Vagina (tissue), 2 donors: ENCODE measurements at regions of chr20 and their contacts with region 1.

Region 1: DNA sequence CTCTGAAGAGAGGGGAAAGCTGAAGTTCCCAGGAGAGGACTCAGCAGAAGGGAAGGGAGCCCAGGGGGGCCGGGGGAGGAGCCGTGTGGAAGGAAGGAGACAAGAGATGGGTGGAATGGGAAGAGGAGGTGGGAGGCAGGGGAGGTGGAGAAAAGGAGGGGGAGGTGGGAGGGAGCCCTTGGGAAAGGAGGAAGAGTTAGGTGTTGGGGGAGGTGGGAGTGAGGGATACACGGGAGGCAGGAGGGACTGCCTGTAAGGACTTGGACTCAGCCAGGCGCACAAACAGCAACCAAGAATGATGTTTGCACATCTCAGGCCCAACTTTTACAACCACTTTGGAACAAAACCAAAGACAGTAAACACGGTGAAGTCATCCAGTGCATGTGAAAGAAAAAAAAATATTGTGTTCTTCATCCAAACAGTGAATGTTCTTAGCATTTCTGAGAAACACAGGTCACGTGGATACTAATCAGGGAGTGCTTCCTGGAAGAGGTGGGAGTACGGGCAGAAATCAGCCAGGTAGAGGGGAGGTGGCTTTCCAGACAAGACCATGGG is 17.4 kb upstream of the LSM14B start:
- DNase-seq: no peak
- H3K4me3 ChIP-seq: no peak overlapping the region
- H3K27ac ChIP-seq: no peak overlapping the region
- H3K4me1 ChIP-seq: no peaks in the 10 kb centered on the region
- H3K27me3 ChIP-seq: no peaks in the 10 kb centered on the region
- CTCF ChIP-seq: no peak
- POLR2A ChIP-seq: no peak

Region 2: GRCh38 chr20:61776491-61777075 is 328.3 kb before region 1 on chr20:
- intact Hi-C with region 1: no loop called
- DNase-seq: no peak
- H3K4me3 ChIP-seq: no peak overlapping the region
- H3K27ac ChIP-seq: no peak overlapping the region
- H3K4me1 ChIP-seq: no peaks in the 10 kb centered on the region
- H3K27me3 ChIP-seq: no peaks in the 10 kb centered on the region
- CTCF ChIP-seq: no peak
- POLR2A ChIP-seq: no peak

Region 3: GRCh38 chr20:63554361-63555278 is 1449.8 kb after region 1 on chr20:
- intact Hi-C with region 1: loop called (anchors 5 kb)
- DNase-seq: no peak
- H3K4me3 ChIP-seq: peak overlapping the region; percentile 61 to 63
- H3K27ac ChIP-seq: no peak overlapping the region
- H3K4me1 ChIP-seq: peaks cover 24% of the 10 kb centered on the region
- H3K27me3 ChIP-seq: peaks cover 5% of the 10 kb centered on the region
- CTCF ChIP-seq: no peak
- POLR2A ChIP-seq: no peak